Panc1 (cell line): ENCODE measurements at regions of chr6 and their contacts with region 1.

Region 1: DNA sequence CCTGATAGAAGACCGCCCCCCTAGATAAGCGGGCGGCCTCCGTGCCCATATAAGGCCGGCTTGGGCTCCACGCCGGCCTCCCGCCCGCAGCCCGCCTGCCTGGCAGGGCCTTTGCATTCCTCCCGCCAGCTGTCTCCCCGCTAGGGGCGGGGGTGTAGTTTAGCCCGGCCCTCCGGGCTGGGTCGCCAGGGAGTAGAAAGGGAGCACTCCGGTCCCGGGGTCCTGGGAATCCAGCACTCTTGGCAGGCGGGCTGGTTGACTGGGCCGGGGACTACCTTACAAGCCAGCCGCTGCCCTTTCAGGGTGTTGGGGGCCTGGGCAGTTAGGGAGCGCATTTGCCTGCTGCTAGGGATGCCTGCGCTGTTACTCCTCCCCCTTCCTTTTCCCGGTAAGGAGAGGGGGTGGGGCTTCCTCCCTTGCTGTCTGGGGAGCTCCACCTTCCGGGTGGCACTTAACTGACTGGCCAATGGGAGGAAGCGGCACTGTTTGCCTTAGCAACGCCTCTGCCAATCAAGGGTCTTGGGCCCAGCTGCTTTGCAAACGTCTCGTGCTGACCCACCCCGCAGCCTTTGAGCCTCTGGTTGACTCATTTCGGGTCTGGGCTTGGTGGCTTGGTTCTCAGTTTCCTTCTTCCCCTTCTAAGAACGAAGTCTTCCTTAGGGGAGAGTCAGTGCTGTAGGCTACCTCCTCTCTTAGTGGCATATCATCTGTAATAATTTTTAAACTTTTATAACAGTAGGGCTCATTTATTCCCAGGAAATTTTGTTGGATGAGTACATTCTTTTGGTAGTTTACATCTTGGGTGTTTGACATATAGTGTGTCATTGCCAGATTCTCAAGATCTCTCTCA is 3.4 kb downstream of the SRF start:
- DNase-seq: peak; percentile 78
- ATAC-seq: peak; percentile 76
- H3K4me3 ChIP-seq: peak overlapping the region; percentile 82 to 90
- H3K27ac ChIP-seq: peak overlapping the region; percentile 72
- H3K4me1 ChIP-seq: peaks cover 19% of the 10 kb centered on the region
- H3K27me3 ChIP-seq: no peaks in the 10 kb centered on the region
- CTCF ChIP-seq: no peak

Region 2: GRCh38 chr6:43037197-43037596 is 137.3 kb before region 1 on chr6:
- CTCF ChIA-PET with region 1: interaction called, 15 read pairs
- POLR2A ChIA-PET with region 1: no interaction called
- in situ Hi-C with region 1: no loop called
- intact Hi-C with region 1: no loop called
- DNase-seq: no peak
- ATAC-seq: no peak
- H3K4me3 ChIP-seq: no peak overlapping the region
- H3K27ac ChIP-seq: no peak overlapping the region
- H3K4me1 ChIP-seq: peaks cover 3% of the 10 kb centered on the region; the same call in 1 of the 2 replicates
- H3K27me3 ChIP-seq: no peaks in the 10 kb centered on the region
- CTCF ChIP-seq: no peak

Region 3: GRCh38 chr6:43547222-43547621 is 372.7 kb after region 1 on chr6:
- CTCF ChIA-PET with region 1: no interaction called
- POLR2A ChIA-PET with region 1: no interaction called
- in situ Hi-C with region 1: no loop called
- intact Hi-C with region 1: no loop called
- DNase-seq: no peak
- ATAC-seq: no peak
- H3K4me3 ChIP-seq: no peak overlapping the region
- H3K27ac ChIP-seq: no peak overlapping the region
- H3K4me1 ChIP-seq: no peaks in the 10 kb centered on the region
- H3K27me3 ChIP-seq: no peaks in the 10 kb centered on the region
- CTCF ChIP-seq: no peak